ENCODE measurements at regions of chr19 and their contacts with region 1.

Region 1: GRCh38 chr19:54029930-54030490 is 33.7 kb downstream of the VSTM1 start:
- DNase-seq: peak; percentile 71
- H3K4me3 ChIP-seq: no peak overlapping the region
- H3K27ac ChIP-seq: no peak overlapping the region
- H3K4me1 ChIP-seq: peaks cover 2% of the 10 kb centered on the region; the same call in 1 of the 2 replicates
- H3K27me3 ChIP-seq: no peaks in the 10 kb centered on the region

Region 2: DNA sequence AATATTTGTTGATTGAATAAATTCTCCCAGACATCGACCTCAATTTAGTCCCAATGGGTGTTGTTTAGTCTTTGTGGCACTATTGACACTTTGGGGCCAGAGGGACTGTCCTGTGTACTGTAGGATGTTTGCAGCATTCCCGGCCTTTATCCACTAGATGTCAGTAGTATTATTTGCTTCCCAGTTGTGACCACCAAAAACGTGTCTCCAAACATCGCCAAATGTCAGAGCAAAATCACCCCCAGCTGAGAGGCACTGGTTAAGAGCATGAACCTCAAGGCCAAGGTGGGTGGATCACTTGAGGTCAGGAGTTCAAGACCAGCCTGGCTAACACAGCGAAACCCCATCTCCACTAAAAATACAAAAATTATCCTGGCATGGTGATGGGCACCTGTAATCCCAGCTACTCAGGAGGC is 221.3 kb before region 1 on chr19:
- in situ Hi-C with region 1: loop called (anchors 5 kb)
- DNase-seq: peak; percentile 70
- H3K4me3 ChIP-seq: no peak overlapping the region
- H3K27ac ChIP-seq: no peak overlapping the region
- H3K4me1 ChIP-seq: no peaks in the 10 kb centered on the region; the same call in 1 of the 2 replicates
- H3K27me3 ChIP-seq: no peaks in the 10 kb centered on the region